ENCODE measurements at regions of chr7 and their contacts with region 1.

Region 1: DNA sequence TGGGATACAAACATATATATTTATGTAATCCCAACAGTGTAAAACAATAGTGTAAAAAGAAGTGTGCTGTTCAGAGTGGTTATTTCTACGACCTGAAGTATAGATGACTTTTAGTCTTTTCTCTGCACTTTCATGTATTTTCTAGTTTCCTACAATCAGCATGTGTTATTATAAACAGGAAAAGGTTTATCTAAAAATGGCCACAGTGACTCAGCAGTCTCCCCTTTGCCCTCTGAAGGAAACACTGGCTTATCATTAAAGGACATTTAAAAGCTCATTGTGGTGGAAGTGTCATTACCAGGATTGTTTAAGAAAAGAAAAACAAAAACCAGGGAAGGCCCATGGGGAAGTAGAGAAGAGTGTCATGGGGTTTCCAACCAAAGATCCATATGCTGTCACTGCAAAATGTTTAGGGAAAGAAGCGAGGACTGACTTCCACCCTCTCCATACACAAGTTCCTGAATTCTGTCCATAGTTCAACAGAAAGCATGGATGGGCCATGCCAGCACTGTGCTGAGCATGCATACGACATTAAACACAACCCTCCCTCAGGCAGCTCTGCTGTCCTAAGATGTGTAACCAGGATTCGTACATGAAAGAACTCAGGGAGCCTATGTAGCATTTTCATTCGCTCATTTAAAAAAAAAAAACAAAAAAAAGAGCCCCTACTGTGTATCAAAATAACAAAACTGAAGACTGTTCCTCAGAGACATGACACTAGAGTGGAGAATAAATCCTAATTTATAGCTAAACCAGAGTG is 10.2 kb downstream of the CYREN start:
- DNase-seq: peak in 1 of 2 donors; percentile 41
- ATAC-seq: peak in 7 of 8 donors; percentile 25 to 73 (median 63)
- H3K4me3 ChIP-seq: peak overlapping the region in 1 of 10 donors; percentile 20
- H3K27ac ChIP-seq: peak overlapping the region; percentile 18 to 88 (median 80)
- H3K4me1 ChIP-seq: peaks cover 26 to 73% (median 66%) of the 10 kb centered on the region in 9 donors
- H3K27me3 ChIP-seq: no peaks in the 10 kb centered on the region
- CTCF ChIP-seq: no peak

Region 2: GRCh38 chr7:134646425-134647305 is 513.6 kb before region 1 on chr7 and contains the start of gene BPGM:
- intact Hi-C with region 1: loop called in 1 of 10 experiments (anchors 5 kb)
- DNase-seq: peak; percentile 93 to 99
- ATAC-seq: peak; percentile 99 to 100 (median 100)
- H3K4me3 ChIP-seq: peak within 1 kb of the TSS; percentile 54 to 84 (median 66)
- H3K27ac ChIP-seq: peak within 1 kb of the TSS; percentile 9 to 92 (median 78)
- H3K4me1 ChIP-seq: peaks cover 0 to 27% (median 17%) of the 10 kb centered on the region in 9 donors
- H3K27me3 ChIP-seq: no peaks in the 10 kb centered on the region
- CTCF ChIP-seq: peak in 4 of 9 donors; percentile 19 to 52 (median 46)
- total RNA-seq, gene BPGM: 12.4 to 19.7 (median 14.1) TPM

Region 3: GRCh38 chr7:135083005-135083404 is 77.3 kb before region 1 on chr7:
- intact Hi-C with region 1: loop called in 1 of 10 experiments (anchors 2 kb)
- DNase-seq: no peak
- ATAC-seq: no peak
- H3K4me3 ChIP-seq: no peak overlapping the region
- H3K27ac ChIP-seq: no peak overlapping the region
- H3K4me1 ChIP-seq: no peaks in the 10 kb centered on the region
- H3K27me3 ChIP-seq: no peaks in the 10 kb centered on the region
- CTCF ChIP-seq: no peak

Region 4: GRCh38 chr7:135736586-135737305 is 576.5 kb after region 1 on chr7:
- intact Hi-C with region 1: no loop called
- DNase-seq: no peak
- ATAC-seq: no peak
- H3K4me3 ChIP-seq: no peak overlapping the region
- H3K27ac ChIP-seq: no peak overlapping the region
- H3K4me1 ChIP-seq: peaks cover 0 to 34% (median 4%) of the 10 kb centered on the region in 9 donors
- H3K27me3 ChIP-seq: no peaks in the 10 kb centered on the region
- CTCF ChIP-seq: no peak

Measured in heart right ventricle (tissue), 16 donors.